Right cardiac atrium (tissue), 5 donors: ENCODE measurements at regions of chr2 and their contacts with region 1.

Region 1: GRCh38 chr2:133780099-133780839 is 212.0 kb upstream of the NCKAP5 start:
- DNase-seq: peak in 1 of 3 donors; percentile 18
- ATAC-seq: peak; percentile 57 to 76
- H3K4me3 ChIP-seq: no peak overlapping the region
- H3K27ac ChIP-seq: no peak overlapping the region
- H3K4me1 ChIP-seq: no peaks in the 10 kb centered on the region
- H3K27me3 ChIP-seq: no peaks in the 10 kb centered on the region

Region 2: DNA sequence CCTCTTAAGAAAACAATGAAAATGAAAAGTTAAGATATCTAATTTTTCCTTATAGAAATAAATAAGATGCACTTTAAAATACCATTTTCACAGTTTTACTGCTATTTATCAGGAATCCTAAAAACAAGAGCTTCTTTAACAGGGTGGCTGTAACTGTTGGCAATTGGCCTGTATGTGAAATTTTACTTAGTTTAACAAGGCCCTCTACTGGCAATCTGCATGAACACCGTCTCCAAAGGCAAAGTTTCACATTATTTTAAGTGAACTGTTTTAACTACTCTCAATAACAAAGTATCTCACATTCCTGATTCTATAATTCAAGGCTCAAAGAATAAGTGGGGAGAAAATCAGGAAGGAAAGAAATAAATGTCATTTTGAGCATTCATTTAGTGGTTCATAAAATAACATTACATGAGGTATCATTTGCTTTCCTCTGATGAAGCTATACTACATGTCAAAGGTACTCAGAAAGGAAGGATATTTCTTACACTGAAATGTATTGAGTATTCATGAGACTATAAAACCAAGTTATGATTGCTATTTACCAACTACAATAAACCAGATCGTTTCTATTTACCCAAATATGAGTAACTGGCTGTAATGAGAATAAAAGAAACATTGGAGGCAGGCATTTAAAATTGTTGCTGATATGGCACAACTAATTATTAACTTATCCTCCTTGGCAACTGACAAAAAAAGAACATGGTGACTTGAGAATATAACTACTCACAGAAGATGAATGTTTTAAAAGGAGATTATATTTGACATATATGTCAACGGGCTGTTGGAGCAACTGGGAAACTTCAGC is 219.0 kb before region 1 on chr2:
- intact Hi-C with region 1: loop called in 2 of 4 experiments (anchors 10 kb)
- DNase-seq: no peak
- ATAC-seq: no peak
- H3K4me3 ChIP-seq: no peak overlapping the region
- H3K27ac ChIP-seq: no peak overlapping the region
- H3K4me1 ChIP-seq: no peaks in the 10 kb centered on the region
- H3K27me3 ChIP-seq: no peaks in the 10 kb centered on the region

Region 3: GRCh38 chr2:133579274-133579673 is 201.0 kb before region 1 on chr2:
- intact Hi-C with region 1: loop called in 2 of 4 experiments (anchors 10 kb)
- DNase-seq: peak; percentile 32 to 73 (median 71)
- ATAC-seq: peak; percentile 85 to 92
- H3K4me3 ChIP-seq: no peak overlapping the region
- H3K27ac ChIP-seq: no peak overlapping the region
- H3K4me1 ChIP-seq: no peaks in the 10 kb centered on the region
- H3K27me3 ChIP-seq: no peaks in the 10 kb centered on the region

Region 4: DNA sequence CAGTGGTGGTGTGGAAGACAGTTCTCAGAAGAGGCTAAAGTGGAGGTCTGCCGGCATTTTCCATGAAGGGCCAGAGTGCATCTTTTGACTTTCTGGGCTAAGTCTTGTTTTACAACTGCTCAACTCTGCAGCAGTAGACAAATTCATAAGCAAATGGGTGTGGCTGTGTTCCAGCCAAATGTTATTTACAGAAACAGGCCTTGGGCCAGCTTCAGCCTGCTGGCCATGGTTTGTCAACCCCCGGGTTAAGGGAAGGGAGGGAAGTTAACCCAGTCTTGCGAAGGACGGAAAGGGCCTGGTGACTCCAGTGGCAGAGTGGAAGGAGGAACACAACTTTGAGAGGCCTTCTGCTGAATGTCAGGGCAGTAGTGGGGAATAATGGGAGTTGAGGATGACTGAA is 177.7 kb before region 1 on chr2:
- intact Hi-C with region 1: no loop called
- DNase-seq: peak; percentile 41 to 51 (median 48)
- ATAC-seq: peak; percentile 69 to 77
- H3K4me3 ChIP-seq: no peak overlapping the region
- H3K27ac ChIP-seq: no peak overlapping the region
- H3K4me1 ChIP-seq: peaks cover 11% of the 10 kb centered on the region
- H3K27me3 ChIP-seq: no peaks in the 10 kb centered on the region